HCT116 (cell line): ENCODE measurements at regions of chr11 and their contacts with region 1.

Region 1: GRCh38 chr11:31958076-31958735 is 132.7 kb upstream of the RCN1 start:
- DNase-seq: peak; percentile 40
- ATAC-seq: peak; percentile 96
- H3K4me3 ChIP-seq: no peak overlapping the region
- H3K27ac ChIP-seq: no peak overlapping the region
- H3K4me1 ChIP-seq: peaks cover 0 to 4% of the 10 kb centered on the region in 2 experiments; a peak in 1 of 4 replicates
- H3K27me3 ChIP-seq: no peaks in the 10 kb centered on the region
- CTCF ChIP-seq: peak; percentile 71 to 96 (median 94)
- POLR2A ChIP-seq: no peak
- RAD21 ChIP-seq: peak; percentile 79

Region 2: GRCh38 chr11:31240338-31240904 is 717.8 kb before region 1 on chr11:
- CTCF ChIA-PET with region 1: interaction called, 11 read pairs
- POLR2A ChIA-PET with region 1: no interaction called
- RAD21 ChIA-PET with region 1: no interaction called
- intact Hi-C with region 1: loop called (anchors 5 kb)
- DNase-seq: peak; percentile 59
- ATAC-seq: peak; percentile 80
- H3K4me3 ChIP-seq: no peak overlapping the region
- H3K27ac ChIP-seq: no peak overlapping the region
- H3K4me1 ChIP-seq: no peaks in the 10 kb centered on the region
- H3K27me3 ChIP-seq: no peaks in the 10 kb centered on the region
- CTCF ChIP-seq: peak; percentile 48 to 72 (median 62); a peak in 5 of 6 replicates
- POLR2A ChIP-seq: no peak
- RAD21 ChIP-seq: peak; percentile 72

Region 3: GRCh38 chr11:31303644-31304180 is 654.5 kb before region 1 on chr11:
- CTCF ChIA-PET with region 1: no interaction called
- POLR2A ChIA-PET with region 1: no interaction called
- RAD21 ChIA-PET with region 1: no interaction called
- intact Hi-C with region 1: no loop called
- DNase-seq: no peak
- ATAC-seq: no peak
- H3K4me3 ChIP-seq: no peak overlapping the region
- H3K27ac ChIP-seq: no peak overlapping the region
- H3K4me1 ChIP-seq: no peaks in the 10 kb centered on the region
- H3K27me3 ChIP-seq: no peaks in the 10 kb centered on the region
- CTCF ChIP-seq: no peak
- POLR2A ChIP-seq: no peak
- RAD21 ChIP-seq: no peak

Region 4: GRCh38 chr11:31487848-31488247 is 470.4 kb before region 1 on chr11:
- CTCF ChIA-PET with region 1: interaction called, 3 read pairs
- POLR2A ChIA-PET with region 1: no interaction called
- RAD21 ChIA-PET with region 1: no interaction called
- intact Hi-C with region 1: loop called (anchors 5 kb)
- DNase-seq: peak; percentile 44
- ATAC-seq: peak; percentile 55
- H3K4me3 ChIP-seq: no peak overlapping the region
- H3K27ac ChIP-seq: no peak overlapping the region
- H3K4me1 ChIP-seq: no peaks in the 10 kb centered on the region
- H3K27me3 ChIP-seq: no peaks in the 10 kb centered on the region
- CTCF ChIP-seq: peak; percentile 39 to 63 (median 40); a peak in 5 of 6 replicates
- POLR2A ChIP-seq: no peak
- RAD21 ChIP-seq: peak; percentile 58

Region 5: GRCh38 chr11:31947051-31947769 is 11.0 kb before region 1 on chr11:
- CTCF ChIA-PET with region 1: interaction called, 29 read pairs
- POLR2A ChIA-PET with region 1: no interaction called
- RAD21 ChIA-PET with region 1: no interaction called
- intact Hi-C with region 1: no loop called
- DNase-seq: no peak
- ATAC-seq: no peak
- H3K4me3 ChIP-seq: no peak overlapping the region
- H3K27ac ChIP-seq: no peak overlapping the region
- H3K4me1 ChIP-seq: peaks cover 0 to 5% of the 10 kb centered on the region in 2 experiments; a peak in 1 of 4 replicates
- H3K27me3 ChIP-seq: no peaks in the 10 kb centered on the region
- CTCF ChIP-seq: no peak
- POLR2A ChIP-seq: no peak
- RAD21 ChIP-seq: no peak

Region 6: DNA sequence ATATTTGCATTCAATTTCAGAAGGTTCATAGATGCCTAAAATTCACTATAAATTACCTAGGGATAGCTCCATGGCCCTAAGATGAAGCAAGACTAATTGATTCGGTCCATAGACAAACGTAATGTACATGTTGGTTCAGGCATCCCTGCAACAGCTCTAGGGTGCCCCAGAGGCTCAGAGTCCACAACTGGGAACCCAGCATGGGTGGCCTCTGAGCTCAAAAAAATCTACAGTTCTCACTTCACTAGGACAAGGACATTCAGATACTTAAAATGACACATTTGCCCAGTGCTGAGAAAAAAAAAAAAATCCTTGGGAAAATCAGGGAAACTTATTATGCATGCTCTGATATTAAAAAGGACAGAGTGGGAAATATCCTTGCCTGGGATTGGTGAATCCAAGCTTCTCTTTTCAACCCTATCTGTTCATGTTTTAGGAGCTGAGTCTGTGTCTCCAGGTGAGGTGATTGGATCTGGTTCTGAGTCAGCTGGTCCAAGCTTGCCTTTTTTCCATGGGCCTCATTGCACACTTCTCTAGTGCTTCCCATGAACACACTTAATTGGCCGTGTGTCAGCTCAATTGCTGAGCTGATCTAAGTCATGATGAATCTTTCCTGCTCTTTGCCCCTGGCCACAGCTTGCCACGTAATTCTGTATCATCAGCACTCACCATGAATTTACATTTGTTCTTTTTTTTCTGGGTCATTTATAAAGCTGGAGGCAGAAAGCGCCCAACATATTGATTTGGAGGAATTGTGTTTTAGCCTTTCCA is 16.3 kb after region 1 on chr11:
- CTCF ChIA-PET with region 1: interaction called, 14 read pairs
- POLR2A ChIA-PET with region 1: no interaction called
- RAD21 ChIA-PET with region 1: no interaction called
- intact Hi-C with region 1: no loop called
- DNase-seq: peak; percentile 12
- ATAC-seq: no peak
- H3K4me3 ChIP-seq: no peak overlapping the region
- H3K27ac ChIP-seq: no peak overlapping the region
- H3K4me1 ChIP-seq: peaks cover 0 to 4% of the 10 kb centered on the region in 2 experiments; a peak in 1 of 4 replicates
- H3K27me3 ChIP-seq: no peaks in the 10 kb centered on the region
- CTCF ChIP-seq: no peak
- POLR2A ChIP-seq: no peak
- RAD21 ChIP-seq: no peak